CD8-positive, alpha-beta T cell (primary cell): ENCODE measurements at regions of chr19 and their contacts with region 1.

Region 1: DNA sequence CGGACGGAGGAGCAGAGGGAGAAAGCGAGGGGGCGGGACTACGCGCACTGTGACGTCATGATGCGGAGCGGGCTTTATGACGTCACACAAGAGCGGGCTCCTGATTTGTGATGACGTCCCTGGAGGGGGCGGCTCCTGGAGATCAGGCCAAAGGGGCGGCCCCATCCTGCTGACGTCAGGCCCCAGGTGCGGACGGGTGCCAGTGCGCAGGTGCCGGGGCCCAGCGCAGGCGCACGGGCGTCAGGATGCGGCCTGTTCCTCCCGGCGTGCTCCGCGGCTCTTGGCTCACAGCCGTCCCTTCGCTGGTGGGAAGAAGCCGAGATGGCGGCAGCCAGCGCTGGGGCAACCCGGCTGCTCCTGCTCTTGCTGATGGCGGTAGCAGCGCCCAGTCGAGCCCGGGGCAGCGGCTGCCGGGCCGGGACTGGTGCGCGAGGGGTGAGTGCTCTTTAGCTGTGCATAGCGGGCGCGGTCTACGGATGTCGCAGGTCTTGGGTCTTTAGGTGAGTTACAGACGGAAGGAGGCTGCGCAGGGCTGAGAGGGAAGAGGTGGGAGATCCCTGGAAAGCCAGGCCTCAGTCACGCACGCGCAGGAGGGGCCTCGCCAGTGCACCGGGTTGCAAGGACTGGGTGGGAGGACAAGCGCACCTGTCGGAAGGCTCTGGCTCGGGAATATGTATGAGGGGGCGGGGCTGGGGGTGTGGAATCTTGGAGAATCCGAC is at the starts of genes EMC10 and GARIN5A:
- DNase-seq: peak; percentile 77 to 98 (median 91)
- ATAC-seq: peak; percentile 96
- H3K4me3 ChIP-seq: peak within 1 kb of the TSS; percentile 97 to 99
- H3K4me3 Mint-ChIP-seq: peak within 1 kb of the TSS; percentile 97
- H3K27ac ChIP-seq: peak within 1 kb of the TSS; percentile 91 to 94
- H3K27ac Mint-ChIP-seq: peak within 1 kb of the TSS; percentile 95
- H3K4me1 ChIP-seq: peaks cover 24% of the 10 kb centered on the region
- H3K4me1 Mint-ChIP-seq: peaks cover 22% of the 10 kb centered on the region
- H3K27me3 ChIP-seq: no peaks in the 10 kb centered on the region
- H3K27me3 Mint-ChIP-seq: no peaks in the 10 kb centered on the region
- CTCF ChIP-seq: no peak
- total RNA-seq, gene EMC10: 96.7 to 104 TPM
- total RNA-seq, gene GARIN5A: 0.33 TPM in 1 of 2 experiments, not detected in the other

Region 2: DNA sequence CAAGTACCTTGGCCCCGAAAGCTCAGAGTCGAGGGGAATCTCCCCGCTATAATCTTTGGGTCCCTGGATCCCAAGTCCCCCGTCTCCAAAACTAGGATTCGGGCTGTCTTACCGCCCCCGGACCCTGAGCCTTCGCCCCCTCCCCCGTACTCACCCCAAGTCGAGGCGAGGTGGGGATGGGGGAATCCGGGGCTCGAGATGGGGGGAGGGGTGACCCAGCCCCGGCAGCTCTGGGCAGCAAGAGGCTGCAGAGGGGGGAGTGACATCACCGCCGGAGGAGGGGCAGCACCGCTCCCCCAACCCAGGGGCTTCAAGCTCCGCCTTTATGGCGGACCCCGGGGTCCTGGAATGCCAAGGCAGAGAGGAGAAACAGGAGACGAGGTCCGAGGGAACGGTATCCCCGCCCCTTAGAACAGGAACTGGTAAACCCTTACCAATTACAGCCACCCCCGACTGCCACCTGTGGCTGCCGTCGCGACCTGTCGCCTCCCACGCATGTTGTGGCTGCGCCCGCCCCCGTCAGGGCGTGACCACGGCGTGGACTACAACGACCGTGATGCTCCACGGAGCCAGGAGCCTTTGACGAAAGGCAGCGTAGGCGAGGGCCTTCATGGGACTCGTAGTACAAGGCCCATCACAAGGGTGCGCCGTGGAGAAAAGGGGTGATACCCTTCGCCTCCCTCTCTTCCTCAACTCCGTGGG is 143.2 kb before region 1 on chr19:
- CTCF ChIA-PET with region 1: no interaction called
- POLR2A ChIA-PET with region 1: no interaction called
- intact Hi-C with region 1: loop called in 1 of 2 experiments (anchors 1 kb)
- DNase-seq: peak; percentile 71 to 93 (median 88)
- ATAC-seq: peak; percentile 74
- H3K4me3 ChIP-seq: peak overlapping the region; percentile 58 to 77
- H3K4me3 Mint-ChIP-seq: peak overlapping the region; percentile 85
- H3K27ac ChIP-seq: no peak overlapping the region
- H3K27ac Mint-ChIP-seq: peak overlapping the region; percentile 24
- H3K4me1 ChIP-seq: peaks cover 48% of the 10 kb centered on the region
- H3K4me1 Mint-ChIP-seq: peaks cover 47% of the 10 kb centered on the region
- H3K27me3 ChIP-seq: peaks cover 27 to 39% of the 10 kb centered on the region in 2 experiments
- H3K27me3 Mint-ChIP-seq: peaks cover 57% of the 10 kb centered on the region
- CTCF ChIP-seq: no peak

Region 3: DNA sequence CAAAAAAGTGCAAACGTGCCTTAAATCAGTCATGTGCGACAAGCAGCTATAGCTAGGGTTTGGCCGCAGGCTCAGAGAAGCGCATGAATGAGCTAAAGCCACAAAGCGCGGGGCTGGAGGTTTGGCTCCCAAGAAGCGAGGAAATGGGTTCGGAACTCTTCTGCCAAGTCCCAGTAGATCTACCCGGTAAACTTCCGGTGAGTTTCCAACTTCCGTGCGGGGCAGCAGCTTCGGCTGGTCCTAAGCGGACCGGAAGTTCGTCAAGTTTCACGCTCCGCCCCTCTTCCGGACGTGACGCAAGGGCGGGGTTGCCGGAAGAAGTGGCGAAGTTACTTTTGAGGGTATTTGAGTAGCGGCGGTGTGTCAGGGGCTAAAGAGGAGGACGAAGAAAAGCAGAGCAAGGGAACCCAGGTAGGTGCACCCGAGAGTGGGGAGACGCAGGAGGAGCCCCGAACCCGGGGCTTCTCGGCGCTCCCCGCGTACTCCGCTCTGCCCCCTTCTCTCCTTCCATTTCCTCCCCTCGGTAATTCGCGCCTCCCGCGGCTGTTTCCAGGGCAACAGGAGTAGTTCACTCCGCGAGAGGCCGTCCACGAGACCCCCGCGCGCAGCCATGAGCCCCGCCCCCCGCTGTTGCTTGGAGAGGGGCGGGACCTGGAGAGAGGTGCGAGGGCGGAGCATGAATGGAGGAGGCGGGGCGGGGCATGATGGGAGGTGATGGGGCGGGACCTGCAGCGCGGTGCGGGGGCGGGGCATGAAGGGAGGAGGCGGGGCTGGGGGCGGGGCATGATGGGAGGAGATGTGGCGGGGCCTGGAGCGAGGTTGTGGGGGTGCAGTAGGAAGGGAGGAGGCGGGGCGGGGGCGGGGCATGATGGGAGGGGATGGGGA is 100.0 kb before region 1 on chr19 and contains the start of gene NR1H2:
- CTCF ChIA-PET with region 1: no interaction called
- POLR2A ChIA-PET with region 1: interaction called, 5 read pairs
- intact Hi-C with region 1: loop called (anchors 1 kb)
- DNase-seq: peak; percentile 89 to 99 (median 95)
- ATAC-seq: peak; percentile 90
- H3K4me3 ChIP-seq: peak within 1 kb of the TSS; percentile 73 to 93
- H3K4me3 Mint-ChIP-seq: peak within 1 kb of the TSS; percentile 99
- H3K27ac ChIP-seq: peak within 1 kb of the TSS; percentile 99 to 100
- H3K27ac Mint-ChIP-seq: peak within 1 kb of the TSS; percentile 100
- H3K4me1 ChIP-seq: peaks cover 11% of the 10 kb centered on the region
- H3K4me1 Mint-ChIP-seq: peaks cover 22% of the 10 kb centered on the region
- H3K27me3 ChIP-seq: no peaks in the 10 kb centered on the region
- H3K27me3 Mint-ChIP-seq: no peaks in the 10 kb centered on the region
- CTCF ChIP-seq: no peak
- total RNA-seq, gene NR1H2: 320 to 327 TPM

Region 4: GRCh38 chr19:50383852-50384684 is 92.3 kb before region 1 on chr19 and contains the start of gene POLD1:
- CTCF ChIA-PET with region 1: no interaction called
- POLR2A ChIA-PET with region 1: no interaction called
- intact Hi-C with region 1: loop called in 1 of 2 experiments (anchors 2 kb)
- DNase-seq: peak; percentile 98 to 100 (median 98)
- ATAC-seq: peak; percentile 93
- H3K4me3 ChIP-seq: peak within 1 kb of the TSS; percentile 70 to 79
- H3K4me3 Mint-ChIP-seq: peak within 1 kb of the TSS; percentile 97
- H3K27ac ChIP-seq: peak within 1 kb of the TSS; percentile 45 to 72
- H3K27ac Mint-ChIP-seq: peak within 1 kb of the TSS; percentile 91
- H3K4me1 ChIP-seq: peaks cover 14% of the 10 kb centered on the region
- H3K4me1 Mint-ChIP-seq: peaks cover 33% of the 10 kb centered on the region
- H3K27me3 ChIP-seq: no peaks in the 10 kb centered on the region
- H3K27me3 Mint-ChIP-seq: no peaks in the 10 kb centered on the region
- CTCF ChIP-seq: no peak
- total RNA-seq, gene POLD1: 19.4 to 21.8 TPM

Region 5: GRCh38 chr19:50431343-50432220 is 44.8 kb before region 1 on chr19:
- CTCF ChIA-PET with region 1: no interaction called
- POLR2A ChIA-PET with region 1: no interaction called
- intact Hi-C with region 1: loop called in 1 of 2 experiments (anchors 1 kb)
- DNase-seq: peak; percentile 73 to 94 (median 89)
- ATAC-seq: peak; percentile 94
- H3K4me3 ChIP-seq: peak overlapping the region; percentile 58 to 65
- H3K4me3 Mint-ChIP-seq: peak overlapping the region; percentile 88
- H3K27ac ChIP-seq: peak overlapping the region; percentile 43 to 48
- H3K27ac Mint-ChIP-seq: peak overlapping the region; percentile 78
- H3K4me1 ChIP-seq: peaks cover 9% of the 10 kb centered on the region
- H3K4me1 Mint-ChIP-seq: peaks cover 17% of the 10 kb centered on the region
- H3K27me3 ChIP-seq: peaks cover 4 to 15% of the 10 kb centered on the region in 2 experiments
- H3K27me3 Mint-ChIP-seq: peaks cover 21% of the 10 kb centered on the region
- CTCF ChIP-seq: no peak

Region 6: DNA sequence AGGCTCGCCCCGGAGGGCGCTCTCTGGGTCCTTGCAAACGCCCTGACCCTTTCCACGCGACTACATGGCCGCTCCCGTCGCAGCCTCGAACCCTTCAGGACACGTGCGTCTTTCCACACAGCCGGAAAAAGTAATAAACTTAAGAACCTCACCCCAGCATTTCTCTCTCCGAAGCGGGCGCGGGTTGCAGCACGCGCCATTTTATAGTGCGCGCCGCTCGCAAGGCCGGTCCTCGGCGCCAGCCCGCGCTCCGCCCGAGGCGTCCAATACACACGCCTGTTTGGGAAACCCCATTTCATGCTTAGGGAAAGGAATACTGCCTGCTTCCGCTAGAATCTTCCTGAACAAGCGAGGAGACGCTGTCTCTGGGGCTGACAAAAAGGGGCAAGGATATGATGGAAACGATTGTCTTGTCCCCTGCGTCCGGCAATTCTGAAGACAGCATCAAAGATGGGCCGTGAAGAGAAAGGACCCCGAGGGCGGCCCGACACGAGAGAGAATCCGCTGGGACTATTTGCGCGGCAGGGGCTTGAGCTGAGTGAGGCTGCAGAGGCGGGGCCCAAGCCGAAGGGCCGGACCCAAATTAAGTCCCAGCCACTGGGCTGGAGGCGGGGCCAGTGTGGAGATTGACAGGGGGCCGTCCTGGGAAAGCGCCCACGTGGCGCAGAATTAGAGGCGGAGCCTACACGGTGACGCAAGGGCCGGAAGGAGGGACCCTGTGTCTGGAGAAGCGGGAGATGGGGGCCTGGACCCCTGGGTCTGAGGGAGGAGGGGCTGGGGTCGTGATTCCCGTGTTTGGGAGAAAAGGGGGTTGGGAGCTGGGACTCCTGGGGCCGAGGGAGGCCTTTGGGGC is 328.3 kb after region 1 on chr19:
- CTCF ChIA-PET with region 1: no interaction called
- POLR2A ChIA-PET with region 1: no interaction called
- intact Hi-C with region 1: loop called (anchors 1 kb)
- DNase-seq: peak; percentile 91 to 99 (median 96)
- ATAC-seq: peak; percentile 95
- H3K4me3 ChIP-seq: peak overlapping the region; percentile 91 to 96
- H3K4me3 Mint-ChIP-seq: peak overlapping the region; percentile 98
- H3K27ac ChIP-seq: peak overlapping the region; percentile 99
- H3K27ac Mint-ChIP-seq: peak overlapping the region; percentile 100
- H3K4me1 ChIP-seq: peaks cover 18% of the 10 kb centered on the region
- H3K4me1 Mint-ChIP-seq: peaks cover 43% of the 10 kb centered on the region
- H3K27me3 ChIP-seq: no peaks in the 10 kb centered on the region
- H3K27me3 Mint-ChIP-seq: no peaks in the 10 kb centered on the region
- CTCF ChIP-seq: no peak